MCF 10A (cell line): ENCODE measurements at regions of chr2 and their contacts with region 1.

Region 1: GRCh38 chr2:36355151-36355889 is at the start of gene CRIM1:
- DNase-seq: peak; percentile 86
- H3K4me3 Mint-ChIP-seq: peak within 1 kb of the TSS; percentile 95
- H3K27ac Mint-ChIP-seq: peak within 1 kb of the TSS; percentile 97
- H3K4me1 Mint-ChIP-seq: peaks cover 28% of the 10 kb centered on the region
- H3K27me3 Mint-ChIP-seq: no peaks in the 10 kb centered on the region
- CTCF ChIP-seq: no peak
- total RNA-seq, gene CRIM1: 119 and 185 TPM in 2 replicates

Region 2: GRCh38 chr2:36214691-36215090 is 140.6 kb before region 1 on chr2:
- CTCF ChIA-PET with region 1: no interaction called
- POLR2A ChIA-PET with region 1: no interaction called
- intact Hi-C with region 1: no loop called
- DNase-seq: no peak
- H3K4me3 Mint-ChIP-seq: no peak overlapping the region
- H3K27ac Mint-ChIP-seq: no peak overlapping the region
- H3K4me1 Mint-ChIP-seq: no peaks in the 10 kb centered on the region
- H3K27me3 Mint-ChIP-seq: peaks cover 20% of the 10 kb centered on the region
- CTCF ChIP-seq: no peak

Region 3: GRCh38 chr2:36367895-36368353 is 12.6 kb after region 1 on chr2:
- CTCF ChIA-PET with region 1: interaction called, 146 read pairs
- POLR2A ChIA-PET with region 1: interaction called, 742 read pairs
- intact Hi-C with region 1: loop called (anchors 1 kb)
- DNase-seq: peak; percentile 79
- H3K4me3 Mint-ChIP-seq: peak overlapping the region; percentile 50
- H3K27ac Mint-ChIP-seq: peak overlapping the region; percentile 87
- H3K4me1 Mint-ChIP-seq: peaks cover 82% of the 10 kb centered on the region
- H3K27me3 Mint-ChIP-seq: no peaks in the 10 kb centered on the region
- CTCF ChIP-seq: no peak

Region 4: DNA sequence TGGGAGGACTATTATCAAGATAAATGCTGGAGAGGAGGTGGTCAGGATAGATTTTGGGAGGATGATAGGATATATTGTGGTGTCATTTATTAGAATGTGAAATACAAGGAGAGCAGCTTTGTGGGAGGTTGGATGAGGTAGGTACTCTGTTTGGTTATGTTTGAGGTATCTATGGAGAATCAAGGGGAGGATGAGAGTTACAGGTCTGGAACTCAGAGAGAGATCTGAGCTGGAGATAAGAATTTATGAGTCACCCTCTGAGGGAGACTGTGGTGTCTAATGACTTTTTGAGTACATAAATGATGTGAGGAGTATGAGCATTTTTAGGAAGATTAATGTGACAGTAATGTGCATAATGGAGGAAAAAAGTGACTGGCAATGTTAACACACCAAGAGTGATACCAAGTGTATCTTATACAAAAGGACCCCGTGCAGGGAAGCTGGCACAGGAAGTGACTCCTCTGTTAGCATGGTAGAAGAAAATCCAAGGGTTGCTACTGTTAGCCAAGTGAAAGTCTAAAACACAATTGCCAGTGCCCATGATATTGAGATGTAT is 48.4 kb after region 1 on chr2:
- CTCF ChIA-PET with region 1: interaction called, 5 read pairs
- POLR2A ChIA-PET with region 1: interaction called, 22 read pairs
- intact Hi-C with region 1: loop called (anchors 1 kb)
- DNase-seq: peak; percentile 75
- H3K4me3 Mint-ChIP-seq: no peak overlapping the region
- H3K27ac Mint-ChIP-seq: no peak overlapping the region
- H3K4me1 Mint-ChIP-seq: peaks cover 12% of the 10 kb centered on the region
- H3K27me3 Mint-ChIP-seq: no peaks in the 10 kb centered on the region
- CTCF ChIP-seq: no peak

Region 5: GRCh38 chr2:36461039-36461681 is 105.8 kb after region 1 on chr2:
- CTCF ChIA-PET with region 1: interaction called, 40 read pairs
- POLR2A ChIA-PET with region 1: interaction called, 37 read pairs
- intact Hi-C with region 1: loop called (anchors 1 kb)
- DNase-seq: peak; percentile 77
- H3K4me3 Mint-ChIP-seq: no peak overlapping the region
- H3K27ac Mint-ChIP-seq: no peak overlapping the region
- H3K4me1 Mint-ChIP-seq: peaks cover 7% of the 10 kb centered on the region
- H3K27me3 Mint-ChIP-seq: no peaks in the 10 kb centered on the region
- CTCF ChIP-seq: no peak

Region 6: DNA sequence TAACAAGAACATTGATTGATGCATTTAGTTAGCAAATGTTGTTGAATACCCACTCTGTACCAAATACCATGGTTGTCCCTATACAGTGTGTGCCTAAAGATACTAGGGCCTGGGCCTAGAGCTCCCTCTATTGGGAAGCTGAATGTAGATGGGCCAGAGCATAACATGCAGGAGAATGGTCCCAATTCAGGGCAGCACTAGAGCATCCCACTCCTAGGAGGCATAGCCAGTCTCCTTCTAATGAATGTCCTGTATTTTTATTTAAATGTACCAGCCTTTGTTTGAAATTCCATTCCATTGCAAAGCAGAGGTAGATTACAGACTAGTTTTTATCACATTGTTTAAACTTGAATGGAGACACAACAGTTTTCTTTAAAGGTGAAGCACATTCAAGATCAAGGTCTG is 152.1 kb after region 1 on chr2:
- CTCF ChIA-PET with region 1: interaction called, 19 read pairs
- POLR2A ChIA-PET with region 1: interaction called, 4 read pairs
- intact Hi-C with region 1: loop called (anchors 1 kb)
- DNase-seq: peak; percentile 82
- H3K4me3 Mint-ChIP-seq: no peak overlapping the region
- H3K27ac Mint-ChIP-seq: peak overlapping the region; percentile 12
- H3K4me1 Mint-ChIP-seq: no peaks in the 10 kb centered on the region
- H3K27me3 Mint-ChIP-seq: no peaks in the 10 kb centered on the region
- CTCF ChIP-seq: peak; percentile 84

Region 7: GRCh38 chr2:36568516-36569246 is 213.4 kb after region 1 on chr2:
- CTCF ChIA-PET with region 1: interaction called, 4 read pairs
- POLR2A ChIA-PET with region 1: interaction called, 12 read pairs
- intact Hi-C with region 1: no loop called
- DNase-seq: peak; percentile 52
- H3K4me3 Mint-ChIP-seq: peak overlapping the region; percentile 57
- H3K27ac Mint-ChIP-seq: peak overlapping the region; percentile 96
- H3K4me1 Mint-ChIP-seq: peaks cover 31% of the 10 kb centered on the region
- H3K27me3 Mint-ChIP-seq: no peaks in the 10 kb centered on the region
- CTCF ChIP-seq: no peak